Sigmoid colon (tissue), 7 donors: ENCODE measurements at regions of chr17 and their contacts with region 1.

Region 1: DNA sequence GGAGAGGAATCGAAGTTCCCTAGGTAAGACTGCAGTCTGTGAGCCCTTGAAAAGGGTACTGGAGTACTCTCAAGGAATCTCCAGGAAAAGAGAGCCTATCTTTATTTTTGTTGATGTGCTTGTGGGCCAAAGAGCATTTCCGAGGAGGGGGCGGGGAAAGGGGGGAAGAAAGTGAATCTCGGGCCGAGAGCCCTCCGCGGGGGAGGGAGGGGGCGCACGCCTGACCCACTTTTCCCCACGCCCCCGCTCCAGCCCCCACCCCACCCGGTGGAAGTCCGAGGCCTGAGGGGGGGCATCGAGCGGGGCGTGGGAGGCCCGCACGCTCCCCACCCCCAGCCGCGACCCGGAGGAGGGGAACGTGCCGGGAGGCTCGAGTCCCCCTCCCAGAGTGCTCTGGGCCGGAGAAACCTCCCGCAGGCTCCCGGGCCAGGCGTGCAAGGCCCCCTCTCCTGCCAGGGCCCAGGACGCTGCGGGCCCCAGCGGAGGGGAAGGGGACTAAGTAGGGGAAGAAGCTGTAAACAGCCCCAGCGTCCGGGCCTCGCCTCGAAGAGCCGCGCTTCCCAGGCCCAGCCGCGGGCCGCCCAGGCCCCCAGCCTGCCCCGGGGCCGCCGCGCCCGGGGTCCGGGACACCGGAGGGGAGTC is 444 bp downstream of the HELZ start:
- DNase-seq: no peak
- H3K4me3 ChIP-seq: peak overlapping the region; percentile 76 to 100 (median 86)
- H3K27ac ChIP-seq: peak overlapping the region; percentile 79 to 92 (median 88)
- H3K4me1 ChIP-seq: peaks cover 0 to 54% (median 49%) of the 10 kb centered on the region in 4 donors
- H3K27me3 ChIP-seq: no peaks in the 10 kb centered on the region
- CTCF ChIP-seq: no peak
- EP300 ChIP-seq: no peak
- POLR2A ChIP-seq: no peak

Region 2: GRCh38 chr17:67366193-67367157 is 121.9 kb after region 1 on chr17 and contains the start of gene PSMD12:
- intact Hi-C with region 1: loop called (anchors 5 kb)
- DNase-seq: peak; percentile 96
- H3K4me3 ChIP-seq: peak within 1 kb of the TSS; percentile 64 to 94 (median 76)
- H3K27ac ChIP-seq: peak within 1 kb of the TSS; percentile 87 to 93 (median 92)
- H3K4me1 ChIP-seq: peaks cover 0 to 47% (median 32%) of the 10 kb centered on the region in 4 donors
- H3K27me3 ChIP-seq: no peaks in the 10 kb centered on the region
- CTCF ChIP-seq: no peak
- EP300 ChIP-seq: peak in 1 of 4 donors; percentile 40
- POLR2A ChIP-seq: peak; percentile 57 to 62
- total RNA-seq, gene PSMD12: 30.0 to 38.9 (median 33.0) TPM